Calu3 (cell line): ENCODE measurements at regions of chr14 and their contacts with region 1.

Region 1: GRCh38 chr14:20855652-20856291 is 35.4 kb upstream of the RNASE3 start:
- DNase-seq: peak; percentile 62
- H3K4me3 Mint-ChIP-seq: no peak overlapping the region
- H3K27ac Mint-ChIP-seq: no peak overlapping the region
- H3K4me1 Mint-ChIP-seq: peaks cover 24% of the 10 kb centered on the region
- H3K27me3 Mint-ChIP-seq: no peaks in the 10 kb centered on the region
- CTCF ChIP-seq: peak; percentile 54

Region 2: DNA sequence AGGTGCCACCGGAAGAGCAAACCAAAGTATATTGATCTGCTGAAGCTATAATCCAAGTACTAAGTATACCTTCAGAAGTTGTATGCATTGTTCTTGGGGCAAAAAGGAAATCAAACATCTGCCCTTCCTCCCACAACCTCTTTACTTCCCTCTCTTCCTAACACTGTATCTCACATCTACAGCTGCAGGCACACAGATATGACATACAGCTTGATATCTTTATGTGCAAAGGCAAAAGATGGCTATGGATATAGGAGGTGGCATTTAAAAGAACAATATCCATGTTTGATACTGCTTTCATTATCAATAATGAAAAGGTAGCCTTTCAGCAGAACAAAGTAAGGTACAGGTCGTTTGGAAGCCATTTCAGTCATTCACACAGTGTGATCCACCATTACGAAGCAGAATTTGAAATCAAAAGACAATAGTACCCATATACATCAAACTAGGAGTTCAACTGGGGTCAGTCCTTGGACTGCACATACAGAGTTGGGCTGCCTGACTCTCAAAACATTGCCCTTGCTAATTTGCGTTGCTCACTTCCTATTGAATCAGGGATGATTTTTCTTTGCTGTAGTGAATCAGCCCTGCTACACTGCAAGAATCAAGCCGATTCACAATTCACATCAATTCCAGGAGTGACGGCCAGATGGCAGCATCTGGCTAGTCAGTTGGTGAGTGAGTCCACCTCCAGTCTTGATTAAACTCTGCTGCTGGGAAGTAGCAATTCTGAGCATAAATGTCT is 158.3 kb before region 1 on chr14:
- CTCF ChIA-PET with region 1: interaction called, 19 read pairs
- intact Hi-C with region 1: loop called (anchors 1 kb)
- DNase-seq: peak; percentile 75
- H3K4me3 Mint-ChIP-seq: no peak overlapping the region
- H3K27ac Mint-ChIP-seq: peak overlapping the region; percentile 76
- H3K4me1 Mint-ChIP-seq: peaks cover 9% of the 10 kb centered on the region
- H3K27me3 Mint-ChIP-seq: no peaks in the 10 kb centered on the region
- CTCF ChIP-seq: peak; percentile 71

Region 3: DNA sequence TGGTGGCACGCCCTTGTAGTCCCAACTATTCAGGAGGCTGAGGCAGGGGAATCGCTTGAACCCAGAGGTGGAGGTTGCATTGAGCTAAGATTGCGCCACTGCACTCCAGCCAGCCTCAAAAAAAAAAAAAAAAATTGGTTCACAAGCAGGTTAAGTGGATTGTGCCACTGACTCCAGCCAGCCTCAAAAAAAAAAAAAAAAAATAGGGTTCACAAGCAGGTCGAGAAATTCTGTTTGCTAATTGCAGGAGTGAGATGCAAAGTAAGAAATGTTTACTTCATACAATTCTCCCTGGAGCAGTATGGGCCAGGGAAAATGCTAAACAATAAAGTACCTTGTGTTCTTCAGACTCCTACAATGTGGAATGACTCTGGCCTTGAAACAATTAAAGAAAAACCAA is 81.4 kb before region 1 on chr14:
- CTCF ChIA-PET with region 1: no interaction called
- intact Hi-C with region 1: no loop called
- DNase-seq: no peak
- H3K4me3 Mint-ChIP-seq: no peak overlapping the region
- H3K27ac Mint-ChIP-seq: no peak overlapping the region
- H3K4me1 Mint-ChIP-seq: peaks cover 12% of the 10 kb centered on the region
- H3K27me3 Mint-ChIP-seq: no peaks in the 10 kb centered on the region
- CTCF ChIP-seq: no peak

Region 4: GRCh38 chr14:20836668-20837338 is 19.0 kb before region 1 on chr14:
- CTCF ChIA-PET with region 1: interaction called, 6 read pairs
- intact Hi-C with region 1: loop called (anchors 2 kb)
- DNase-seq: peak; percentile 22
- H3K4me3 Mint-ChIP-seq: no peak overlapping the region
- H3K27ac Mint-ChIP-seq: no peak overlapping the region
- H3K4me1 Mint-ChIP-seq: no peaks in the 10 kb centered on the region
- H3K27me3 Mint-ChIP-seq: no peaks in the 10 kb centered on the region
- CTCF ChIP-seq: no peak

Region 5: DNA sequence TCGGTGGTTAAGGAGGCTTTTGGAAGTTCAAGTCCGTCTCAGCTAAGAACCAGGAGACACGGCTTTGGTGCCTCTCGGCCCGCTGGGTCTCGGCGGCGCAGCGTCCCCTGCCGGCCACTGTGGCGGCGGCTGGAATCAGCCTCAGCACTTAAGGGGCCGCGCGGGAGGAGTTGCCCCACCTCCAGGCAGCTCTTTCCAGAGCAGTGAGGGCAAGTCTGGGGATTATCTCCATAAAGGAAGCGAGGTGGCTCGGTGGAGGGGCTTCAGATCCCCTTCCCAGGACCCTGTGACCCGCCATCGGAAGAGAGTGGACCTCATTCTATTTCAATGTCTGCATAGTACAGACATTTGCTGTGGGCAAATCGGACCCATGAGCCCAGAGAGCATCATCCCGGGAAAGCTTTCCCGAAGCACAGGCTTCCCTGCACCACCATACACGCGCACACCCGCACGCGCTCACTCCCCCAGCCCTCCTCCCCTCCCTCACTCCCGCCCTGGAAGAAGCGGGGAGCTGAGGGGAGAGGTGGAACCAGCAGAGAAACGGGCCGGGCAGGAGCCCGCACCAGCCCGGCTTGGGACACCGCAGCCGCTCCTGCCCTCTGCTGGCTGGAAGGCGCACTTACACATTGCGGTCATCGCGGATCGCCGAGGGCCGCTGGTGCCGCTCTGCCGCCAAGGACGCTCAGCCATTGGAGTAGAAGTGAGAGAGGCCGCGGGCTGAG is 115.4 kb after region 1 on chr14:
- CTCF ChIA-PET with region 1: interaction called, 33 read pairs
- intact Hi-C with region 1: loop called (anchors 1 kb)
- DNase-seq: peak; percentile 86
- H3K4me3 Mint-ChIP-seq: peak overlapping the region; percentile 85
- H3K27ac Mint-ChIP-seq: peak overlapping the region; percentile 39
- H3K4me1 Mint-ChIP-seq: peaks cover 17% of the 10 kb centered on the region
- H3K27me3 Mint-ChIP-seq: peaks cover 28% of the 10 kb centered on the region
- CTCF ChIP-seq: peak; percentile 69

Region 6: DNA sequence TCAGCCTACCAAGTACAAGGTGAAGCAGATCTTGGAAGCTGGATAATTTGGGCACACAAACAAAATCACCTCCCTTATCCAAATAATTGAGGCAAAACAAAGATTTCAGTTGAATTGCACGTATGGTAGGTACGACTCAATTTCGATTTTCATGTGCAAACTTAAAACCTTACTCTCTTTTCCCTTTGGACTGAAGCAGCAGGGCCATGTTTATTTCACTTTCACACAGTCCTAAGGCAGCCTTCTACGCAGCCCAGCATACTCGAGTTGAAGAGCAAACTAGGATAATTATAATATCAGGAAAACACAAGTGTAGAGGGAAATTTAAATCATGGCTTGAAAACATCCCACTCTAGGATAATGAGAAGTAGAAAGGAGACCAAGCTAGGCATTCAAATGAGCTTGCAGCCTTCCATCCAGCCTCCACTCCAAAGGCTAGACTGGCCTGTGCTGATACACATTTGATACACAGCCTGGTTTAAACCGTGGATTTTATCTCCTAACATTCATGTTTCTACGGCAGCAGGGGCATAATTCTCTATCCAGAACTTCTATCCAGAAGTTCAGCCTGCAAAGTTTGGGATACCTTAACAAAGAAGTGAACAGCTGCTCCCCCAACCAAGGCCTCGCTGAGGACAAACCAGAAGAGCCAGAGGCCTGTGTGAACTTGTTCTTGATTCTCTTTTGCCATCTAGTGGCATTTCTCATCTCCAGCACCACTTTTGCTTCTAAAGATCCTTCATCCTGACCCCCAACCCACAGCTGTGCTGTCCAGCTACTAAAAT is 184.0 kb after region 1 on chr14:
- CTCF ChIA-PET with region 1: interaction called, 13 read pairs
- intact Hi-C with region 1: loop called (anchors 10 kb)
- DNase-seq: peak; percentile 37
- H3K4me3 Mint-ChIP-seq: no peak overlapping the region
- H3K27ac Mint-ChIP-seq: no peak overlapping the region
- H3K4me1 Mint-ChIP-seq: peaks cover 36% of the 10 kb centered on the region
- H3K27me3 Mint-ChIP-seq: peaks cover 70% of the 10 kb centered on the region
- CTCF ChIP-seq: peak; percentile 44